ENCODE measurements at regions of chr12 and their contacts with region 1.

Region 1: GRCh38 chr12:131290255-131290959 is 336.7 kb downstream of the ADGRD1 start:
- DNase-seq: no peak
- H3K4me3 ChIP-seq: no peak overlapping the region
- H3K27ac ChIP-seq: no peak overlapping the region
- H3K4me1 ChIP-seq: no peaks in the 10 kb centered on the region
- H3K27me3 ChIP-seq: no peaks in the 10 kb centered on the region
- CTCF ChIP-seq: no peak
- POLR2A ChIP-seq: no peak

Region 2: GRCh38 chr12:131673888-131674257 is 383.5 kb after region 1 on chr12:
- intact Hi-C with region 1: loop called (anchors 5 kb)
- DNase-seq: peak in 1 of 2 donors; percentile 25
- H3K4me3 ChIP-seq: no peak overlapping the region
- H3K27ac ChIP-seq: no peak overlapping the region
- H3K4me1 ChIP-seq: no peaks in the 10 kb centered on the region
- H3K27me3 ChIP-seq: no peaks in the 10 kb centered on the region
- CTCF ChIP-seq: no peak
- POLR2A ChIP-seq: no peak

Measured in vagina (tissue), 2 donors.